Common myeloid progenitor, CD34-positive (primary cell): ENCODE measurements at regions of chr4 and their contacts with region 1.

Region 1: GRCh38 chr4:41257257-41257901 is 651 bp downstream of the UCHL1 start:
- DNase-seq: peak; percentile 58 to 86 (median 83)
- H3K4me3 ChIP-seq: peak overlapping the region; percentile 51 to 75 (median 61)
- H3K27ac ChIP-seq: no peak overlapping the region
- H3K4me1 ChIP-seq: peaks cover 5 to 25% (median 17%) of the 10 kb centered on the region in 4 experiments
- H3K27me3 ChIP-seq: peaks cover 10 to 29% (median 14%) of the 10 kb centered on the region in 5 experiments

Region 2: GRCh38 chr4:41160856-41161255 is 96.5 kb before region 1 on chr4:
- CTCF ChIA-PET with region 1: no interaction called
- POLR2A ChIA-PET with region 1: no interaction called
- DNase-seq: no peak
- H3K4me3 ChIP-seq: no peak overlapping the region
- H3K27ac ChIP-seq: no peak overlapping the region
- H3K4me1 ChIP-seq: no peaks in the 10 kb centered on the region
- H3K27me3 ChIP-seq: no peaks in the 10 kb centered on the region

Region 3: DNA sequence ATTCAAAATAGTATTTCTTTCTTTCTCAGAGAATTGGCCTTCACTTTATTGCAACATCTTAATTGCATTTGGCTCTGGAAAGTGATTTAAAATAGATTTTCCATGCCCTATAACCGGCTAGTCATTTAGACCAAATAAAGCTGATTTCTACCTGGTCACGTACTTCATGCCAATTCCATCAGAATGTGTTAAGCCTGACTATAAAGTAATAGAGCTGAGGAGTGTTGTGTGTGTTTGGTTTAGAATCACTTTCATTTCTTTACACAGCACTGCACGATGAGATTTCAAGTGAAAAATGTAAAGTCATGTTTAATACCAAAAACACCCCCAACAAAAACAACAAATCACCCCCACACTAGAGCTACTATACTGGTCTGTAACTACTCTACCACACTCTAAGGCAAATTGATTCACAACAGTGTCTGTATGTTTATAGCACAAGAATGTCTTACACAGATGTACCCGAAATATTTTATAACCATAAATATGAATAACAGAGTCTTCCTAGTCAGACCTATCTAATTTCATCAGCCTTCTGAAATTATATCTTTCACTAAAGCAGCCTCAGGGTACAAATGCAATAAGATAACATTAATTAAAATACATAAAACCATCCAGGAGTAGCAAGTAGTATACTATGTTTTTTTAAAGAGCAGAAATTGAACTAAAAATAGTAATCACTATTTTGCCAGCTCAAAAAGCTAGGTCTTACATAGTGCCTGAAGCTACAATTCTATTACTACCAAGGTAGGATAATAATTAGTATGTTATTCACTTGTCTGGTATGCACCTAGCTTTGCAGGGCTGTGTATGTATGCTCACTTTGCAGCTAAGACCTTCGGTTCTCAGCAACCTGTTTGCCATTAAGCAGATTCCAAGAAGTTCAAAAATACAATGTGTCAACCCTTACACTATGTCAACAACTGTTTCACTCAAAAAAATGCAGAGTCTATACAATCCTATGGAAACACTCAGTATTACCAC is 71.5 kb before region 1 on chr4:
- CTCF ChIA-PET with region 1: no interaction called
- POLR2A ChIA-PET with region 1: no interaction called
- DNase-seq: peak in 2 of 3 donors; percentile 4 to 29
- H3K4me3 ChIP-seq: no peak overlapping the region
- H3K27ac ChIP-seq: no peak overlapping the region
- H3K4me1 ChIP-seq: no peaks in the 10 kb centered on the region
- H3K27me3 ChIP-seq: no peaks in the 10 kb centered on the region

Region 4: GRCh38 chr4:41661442-41662076 is 404.2 kb after region 1 on chr4:
- CTCF ChIA-PET with region 1: interaction called, 33 read pairs
- POLR2A ChIA-PET with region 1: no interaction called
- DNase-seq: peak; percentile 38 to 73 (median 62)
- H3K4me3 ChIP-seq: no peak overlapping the region
- H3K27ac ChIP-seq: no peak overlapping the region
- H3K4me1 ChIP-seq: no peaks in the 10 kb centered on the region
- H3K27me3 ChIP-seq: peaks cover 0 to 2% (median 0%) of the 10 kb centered on the region in 5 experiments